Heart right ventricle (tissue), 16 donors: ENCODE measurements at regions of chr6 and their contacts with region 1.

Region 1: GRCh38 chr6:34757687-34758274 is 476 bp downstream of the SNRPC start:
- DNase-seq: no peak
- ATAC-seq: no peak
- H3K4me3 ChIP-seq: peak overlapping the region; percentile 59 to 83 (median 76)
- H3K27ac ChIP-seq: peak overlapping the region; percentile 85 to 97 (median 94)
- H3K4me1 ChIP-seq: peaks cover 4 to 53% (median 34%) of the 10 kb centered on the region in 9 donors
- H3K27me3 ChIP-seq: no peaks in the 10 kb centered on the region
- CTCF ChIP-seq: no peak

Region 2: DNA sequence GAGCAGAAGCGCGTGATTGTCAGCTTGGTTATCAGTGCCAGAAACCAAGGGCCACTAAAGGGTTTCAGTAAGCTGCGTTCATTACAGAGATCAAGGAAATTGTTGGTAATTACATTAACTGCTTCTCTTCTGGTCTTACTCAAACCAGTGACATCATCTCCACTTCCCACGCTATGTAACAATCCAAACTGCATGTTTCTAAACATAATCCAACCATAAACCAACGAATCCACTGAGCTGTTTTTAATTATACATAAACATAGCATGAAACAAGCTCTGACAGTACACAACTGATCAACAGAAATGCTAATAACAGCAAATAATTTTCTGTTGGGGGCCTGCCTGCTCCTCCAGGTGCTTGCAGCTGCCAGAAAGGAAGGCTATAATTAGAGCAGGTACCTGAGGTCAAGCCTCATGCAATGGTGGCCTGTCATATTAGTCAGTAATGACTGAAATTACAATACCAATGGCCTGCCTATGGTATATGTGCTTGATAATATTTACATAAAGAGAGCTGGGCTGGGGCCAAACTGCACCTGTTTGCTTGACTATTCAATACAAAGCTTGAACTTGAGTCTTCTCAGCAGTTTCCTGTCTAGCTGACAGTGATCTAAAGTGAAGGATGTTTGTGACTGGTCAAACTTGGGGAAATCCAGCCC is 101.3 kb before region 1 on chr6:
- intact Hi-C with region 1: loop called in 1 of 10 experiments (anchors 10 kb)
- DNase-seq: peak in 1 of 2 donors; percentile 25
- ATAC-seq: peak; percentile 23 to 72 (median 59)
- H3K4me3 ChIP-seq: peak overlapping the region in 9 of 10 donors; percentile 28 to 55 (median 49)
- H3K27ac ChIP-seq: peak overlapping the region; percentile 83 to 96 (median 92)
- H3K4me1 ChIP-seq: peaks cover 11 to 65% (median 43%) of the 10 kb centered on the region in 9 donors
- H3K27me3 ChIP-seq: no peaks in the 10 kb centered on the region
- CTCF ChIP-seq: no peak

Region 3: GRCh38 chr6:34696739-34697543 is 60.8 kb before region 1 on chr6 and contains the start of gene ILRUN:
- intact Hi-C with region 1: loop called in 5 of 10 experiments (anchors 5 to 10 kb)
- DNase-seq: peak; percentile 96 to 98
- ATAC-seq: peak; percentile 94 to 98 (median 96)
- H3K4me3 ChIP-seq: peak within 1 kb of the TSS; percentile 89 to 100 (median 96)
- H3K27ac ChIP-seq: peak within 1 kb of the TSS; percentile 91 to 99 (median 97)
- H3K4me1 ChIP-seq: peaks cover 5 to 44% (median 30%) of the 10 kb centered on the region in 9 donors
- H3K27me3 ChIP-seq: no peaks in the 10 kb centered on the region
- CTCF ChIP-seq: no peak
- total RNA-seq, gene ILRUN: 86.9 to 157 (median 114) TPM

Region 4: DNA sequence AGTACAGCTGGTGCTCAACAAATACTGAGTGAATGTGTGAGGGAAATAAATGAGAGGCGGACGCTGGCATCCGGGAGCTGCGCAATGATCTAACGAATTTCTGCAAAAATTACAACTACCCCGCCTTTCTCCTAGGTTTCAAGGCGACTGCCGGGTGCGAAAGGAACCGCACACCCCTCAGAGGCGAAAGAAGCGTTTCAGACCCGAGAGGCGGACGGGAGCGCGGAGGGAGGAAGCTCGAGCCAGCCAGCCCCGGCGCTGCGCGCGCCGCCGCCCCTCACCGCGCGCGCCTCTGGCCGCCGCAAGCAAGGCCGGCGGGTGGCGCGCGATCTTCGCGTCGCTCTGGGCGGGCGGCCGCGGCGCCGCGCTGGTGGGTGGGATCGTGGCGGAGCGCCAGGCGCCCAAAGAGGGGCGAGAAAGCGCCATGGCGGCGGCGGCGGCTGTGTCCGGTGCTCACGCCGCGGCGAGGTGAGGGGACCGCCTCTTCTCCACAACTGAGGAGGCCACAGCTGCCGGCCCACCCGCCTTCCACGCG is 34.0 kb after region 1 on chr6 and contains the start of gene BLTP3A:
- intact Hi-C with region 1: loop called in 2 of 10 experiments (anchors 2 to 5 kb)
- DNase-seq: peak; percentile 65 to 83
- ATAC-seq: peak; percentile 90 to 96 (median 94)
- H3K4me3 ChIP-seq: peak within 1 kb of the TSS; percentile 77 to 99 (median 96)
- H3K27ac ChIP-seq: peak within 1 kb of the TSS; percentile 82 to 98 (median 97)
- H3K4me1 ChIP-seq: peaks cover 4 to 35% (median 21%) of the 10 kb centered on the region in 9 donors
- H3K27me3 ChIP-seq: no peaks in the 10 kb centered on the region
- CTCF ChIP-seq: peak in 2 of 9 donors; percentile 20 to 24
- total RNA-seq, gene BLTP3A: 18.0 to 25.0 (median 21.2) TPM

Region 5: DNA sequence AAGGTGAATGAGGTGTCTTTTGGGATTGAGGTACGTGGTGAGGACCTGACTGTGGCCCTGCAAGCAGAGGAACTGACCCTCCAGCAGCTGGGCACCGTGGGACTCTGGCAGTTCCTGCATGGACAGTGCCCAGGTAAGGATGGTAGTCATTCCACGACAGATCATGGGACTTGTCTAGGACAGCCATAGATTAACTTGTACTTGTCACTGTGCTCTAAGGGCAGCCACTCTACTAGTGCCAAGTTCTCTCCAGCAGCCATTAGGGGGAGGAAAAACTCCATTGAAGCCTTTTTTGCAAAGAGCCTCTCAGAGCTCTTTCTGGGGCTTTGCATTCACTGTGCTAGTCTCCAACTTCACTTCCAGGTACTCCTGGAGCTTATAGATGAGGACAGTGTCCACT is 109.7 kb after region 1 on chr6:
- intact Hi-C with region 1: loop called in 1 of 10 experiments (anchors 10 kb)
- DNase-seq: no peak
- ATAC-seq: peak in 7 of 8 donors; percentile 26 to 66 (median 48)
- H3K4me3 ChIP-seq: no peak overlapping the region
- H3K27ac ChIP-seq: peak overlapping the region in 7 of 10 donors; percentile 13 to 76 (median 48)
- H3K4me1 ChIP-seq: peaks cover 0 to 35% (median 19%) of the 10 kb centered on the region in 9 donors
- H3K27me3 ChIP-seq: no peaks in the 10 kb centered on the region
- CTCF ChIP-seq: peak in 7 of 9 donors; percentile 11 to 51 (median 33)